HCT116 (cell line): ENCODE measurements at regions of chr1 and their contacts with region 1.

Region 1: GRCh38 chr1:155250633-155251449 is 4.4 kb downstream of the ENTREP3 start:
- DNase-seq: peak; percentile 72
- ATAC-seq: peak; percentile 87
- H3K4me3 ChIP-seq: no peak overlapping the region
- H3K27ac ChIP-seq: peak overlapping the region; percentile 23
- H3K4me1 ChIP-seq: peaks cover 14 to 31% of the 10 kb centered on the region in 2 experiments; a peak in 3 of 4 replicates
- H3K27me3 ChIP-seq: no peaks in the 10 kb centered on the region
- CTCF ChIP-seq: peak; percentile 99 to 100 (median 99)
- POLR2A ChIP-seq: no peak
- RAD21 ChIP-seq: peak; percentile 96

Region 2: DNA sequence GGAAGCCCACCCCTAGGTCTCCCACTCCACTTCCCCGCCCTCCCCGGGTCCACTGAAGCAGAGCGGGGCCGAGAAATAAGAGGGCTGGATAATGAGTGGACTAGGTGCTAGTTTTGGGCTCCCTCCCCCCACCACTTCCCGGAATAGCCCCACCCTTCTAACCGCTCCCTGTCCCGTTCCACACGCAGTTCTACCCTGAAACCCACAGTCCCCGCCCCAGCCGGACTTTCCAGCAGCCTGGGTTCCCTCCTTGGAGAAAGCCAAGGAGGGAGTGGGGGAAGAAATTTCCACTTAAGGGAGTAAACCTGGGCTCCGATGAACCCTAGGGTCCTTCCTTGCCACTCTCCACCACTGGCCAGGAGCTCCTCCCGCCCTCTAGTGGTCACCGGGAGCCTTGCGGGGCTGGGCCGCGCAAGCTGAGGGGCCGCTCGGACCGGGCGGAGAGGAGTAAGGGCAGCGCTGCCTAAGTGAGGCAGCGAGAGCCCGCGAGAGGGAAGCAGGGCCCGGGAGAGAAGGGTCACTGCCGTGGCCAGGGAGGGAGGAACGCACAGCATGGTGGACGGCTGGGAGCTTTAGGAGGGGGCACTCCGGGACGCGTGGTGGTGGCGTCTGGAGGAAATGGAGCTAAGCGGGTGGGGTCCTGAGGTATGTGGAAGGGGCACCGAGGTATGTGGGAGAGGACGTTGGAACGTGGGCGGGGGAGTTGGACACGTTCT is 57.4 kb before region 1 on chr1:
- CTCF ChIA-PET with region 1: interaction called, 12 read pairs
- POLR2A ChIA-PET with region 1: no interaction called
- RAD21 ChIA-PET with region 1: no interaction called
- intact Hi-C with region 1: no loop called
- DNase-seq: peak; percentile 79
- ATAC-seq: peak; percentile 78
- H3K4me3 ChIP-seq: peak overlapping the region; percentile 65 to 66
- H3K27ac ChIP-seq: peak overlapping the region; percentile 97
- H3K4me1 ChIP-seq: peaks cover 15 to 36% of the 10 kb centered on the region in 2 experiments; a peak in 3 of 4 replicates
- H3K27me3 ChIP-seq: no peaks in the 10 kb centered on the region
- CTCF ChIP-seq: peak in 2 of 3 experiments; percentile 97 to 99; a peak in 4 of 6 replicates
- POLR2A ChIP-seq: peak; percentile 30
- RAD21 ChIP-seq: no peak

Region 3: GRCh38 chr1:155261852-155262673 is 11.2 kb after region 1 on chr1 and contains the start of gene SCAMP3:
- CTCF ChIA-PET with region 1: interaction called, 18 read pairs
- POLR2A ChIA-PET with region 1: interaction called, 3 read pairs
- RAD21 ChIA-PET with region 1: interaction called in 1 of 2 experiments, 3 read pairs
- intact Hi-C with region 1: no loop called
- DNase-seq: peak; percentile 97
- ATAC-seq: peak; percentile 95
- H3K4me3 ChIP-seq: peak within 1 kb of the TSS; percentile 92 to 94
- H3K27ac ChIP-seq: peak within 1 kb of the TSS; percentile 68
- H3K4me1 ChIP-seq: peaks cover 7 to 15% of the 10 kb centered on the region in 2 experiments; a peak in 3 of 4 replicates
- H3K27me3 ChIP-seq: no peaks in the 10 kb centered on the region
- CTCF ChIP-seq: no peak
- POLR2A ChIP-seq: peak; percentile 40
- RAD21 ChIP-seq: no peak
- total RNA-seq, gene SCAMP3: 64.2 TPM

Region 4: GRCh38 chr1:155323798-155324610 is 73.2 kb after region 1 on chr1:
- CTCF ChIA-PET with region 1: interaction called, 44 read pairs
- POLR2A ChIA-PET with region 1: interaction called, 5 read pairs
- RAD21 ChIA-PET with region 1: interaction called, 4 to 9 read pairs
- intact Hi-C with region 1: loop called (anchors 1 kb)
- DNase-seq: peak; percentile 89
- ATAC-seq: peak; percentile 77
- H3K4me3 ChIP-seq: peak overlapping the region; percentile 83 to 96
- H3K27ac ChIP-seq: peak overlapping the region; percentile 96
- H3K4me1 ChIP-seq: peaks cover 15 to 25% of the 10 kb centered on the region in 2 experiments
- H3K27me3 ChIP-seq: no peaks in the 10 kb centered on the region
- CTCF ChIP-seq: no peak
- POLR2A ChIP-seq: peak; percentile 85
- RAD21 ChIP-seq: no peak

Region 5: DNA sequence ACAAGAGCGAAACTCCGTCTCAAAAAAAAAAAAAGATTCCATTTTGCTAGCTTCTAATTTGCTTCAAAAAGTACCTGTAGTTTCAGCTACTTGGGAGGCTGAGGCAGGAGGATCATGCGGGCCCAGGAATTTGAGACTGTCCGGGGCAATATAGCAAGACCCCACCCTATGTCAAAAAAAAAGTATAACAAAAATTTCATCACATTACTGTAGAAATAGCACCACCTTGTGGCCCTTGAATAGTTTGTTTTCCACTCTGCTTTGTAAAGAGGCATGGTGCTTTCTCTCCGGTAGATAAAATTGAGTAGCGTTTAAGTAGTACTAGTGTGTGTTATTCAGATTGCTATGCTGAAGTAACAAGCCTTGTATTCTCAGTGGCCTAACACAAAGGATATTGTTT is 340.9 kb after region 1 on chr1:
- CTCF ChIA-PET with region 1: interaction called, 4 read pairs
- POLR2A ChIA-PET with region 1: no interaction called
- RAD21 ChIA-PET with region 1: no interaction called
- intact Hi-C with region 1: loop called (anchors 1 kb)
- DNase-seq: peak; percentile 70
- ATAC-seq: peak; percentile 83
- H3K4me3 ChIP-seq: no peak overlapping the region
- H3K27ac ChIP-seq: no peak overlapping the region
- H3K4me1 ChIP-seq: no peaks in the 10 kb centered on the region
- H3K27me3 ChIP-seq: no peaks in the 10 kb centered on the region
- CTCF ChIP-seq: peak; percentile 40 to 84 (median 59)
- POLR2A ChIP-seq: no peak
- RAD21 ChIP-seq: peak; percentile 84